ENCODE measurements at regions of chr3 and their contacts with region 1.

Region 1: DNA sequence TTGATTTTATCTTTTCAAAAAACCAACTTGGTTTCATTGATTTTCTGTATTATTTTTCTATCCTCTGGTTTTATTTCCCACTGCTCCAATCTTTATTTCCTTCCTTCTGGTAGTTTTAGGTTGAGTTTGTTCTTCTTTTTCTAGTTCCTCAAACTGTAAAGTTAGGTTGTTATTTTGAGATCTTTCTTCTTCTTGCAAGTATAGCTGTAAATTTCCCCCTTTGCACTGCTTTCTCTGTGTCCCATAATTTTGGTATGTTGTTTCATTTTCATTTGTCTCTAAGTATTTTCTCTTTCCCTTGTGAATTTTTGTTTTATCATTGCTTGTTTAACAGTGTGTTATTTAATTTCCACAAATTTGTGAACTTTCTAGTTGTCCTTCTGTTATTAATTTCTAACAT is 120.0 kb downstream of the PLD1 start:
- DNase-seq: no peak

Region 2: GRCh38 chr3:171763392-171763791 is 73.1 kb after region 1 on chr3:
- intact Hi-C with region 1: loop called in 1 of 2 experiments (anchors 2 kb)
- DNase-seq: no peak

Region 3: DNA sequence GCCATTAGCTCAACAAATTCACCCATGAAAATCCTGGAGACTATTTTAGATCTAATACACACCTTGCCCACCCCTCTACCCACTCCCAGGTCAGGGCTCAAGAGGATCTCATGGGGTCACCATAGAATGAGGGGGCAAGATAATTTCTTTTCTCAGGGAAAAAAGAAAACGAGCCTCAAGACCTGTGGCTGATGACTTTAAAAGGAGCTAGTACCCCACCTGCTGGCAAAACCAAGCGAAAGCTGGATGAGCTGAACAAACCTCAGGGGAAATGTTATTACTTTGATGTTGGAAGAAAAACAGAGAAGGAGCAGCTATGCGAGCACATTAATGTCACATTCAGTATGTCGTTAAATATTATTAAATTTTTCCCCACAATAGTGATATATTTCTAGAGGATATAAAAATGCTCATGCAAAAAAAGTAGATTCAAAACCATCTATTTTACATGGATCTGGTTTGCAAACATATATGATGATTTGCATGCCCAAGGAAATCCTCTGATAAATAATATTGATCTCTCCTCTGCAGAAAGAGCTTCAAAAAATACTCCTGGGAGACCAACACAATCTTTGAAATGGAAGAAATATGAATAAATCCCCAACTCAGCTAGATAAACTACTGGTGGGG is 82.3 kb after region 1 on chr3:
- intact Hi-C with region 1: loop called in 1 of 2 experiments (anchors 10 kb)
- DNase-seq: no peak